ENCODE measurements at regions of chr13 and their contacts with region 1.

Region 1: DNA sequence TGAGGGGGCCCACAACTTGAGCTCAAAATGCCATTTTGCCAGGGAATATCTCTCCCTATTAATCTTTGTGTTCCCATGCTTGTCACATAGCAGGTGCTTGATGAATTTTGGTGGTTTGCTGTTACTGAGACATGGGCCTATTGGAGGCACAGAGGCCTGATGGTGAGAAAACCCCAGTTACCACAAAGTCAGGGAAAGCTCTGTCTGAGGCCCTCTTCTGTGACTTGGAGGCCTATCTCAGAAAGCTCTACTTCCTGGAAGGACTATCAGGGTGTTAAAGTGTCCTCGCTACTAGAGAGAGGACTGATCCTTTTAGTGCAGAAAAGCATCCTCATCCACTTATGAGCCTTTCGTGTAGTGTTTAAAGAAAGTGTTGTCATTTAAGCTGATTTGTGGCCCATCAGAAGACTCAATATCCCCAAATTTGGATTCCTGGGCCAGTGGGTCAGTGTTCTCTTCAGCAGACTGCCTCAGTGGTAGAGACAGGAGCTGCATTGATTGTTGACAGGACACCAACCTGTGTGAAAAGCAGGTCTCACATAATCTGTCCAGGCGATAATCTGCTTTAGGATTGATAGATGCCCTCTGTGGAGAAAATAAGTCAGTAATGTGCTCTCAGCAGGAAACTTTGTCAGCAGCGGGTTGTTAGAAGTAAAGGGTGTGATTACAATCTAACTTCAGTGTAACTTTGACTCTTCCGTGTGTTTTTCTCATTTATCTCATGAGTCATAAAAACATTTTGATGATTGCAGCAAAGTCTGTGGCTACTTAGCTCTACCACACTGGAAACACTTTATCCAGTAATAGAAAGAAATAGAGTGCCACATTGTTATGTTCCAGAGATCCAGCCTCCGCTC is 121.0 kb downstream of the AKAP11 start:
- DNase-seq: peak; percentile 46
- ATAC-seq: peak; percentile 57
- H3K4me3 Mint-ChIP-seq: peak overlapping the region; percentile 80
- H3K27ac Mint-ChIP-seq: peak overlapping the region; percentile 100
- H3K4me1 Mint-ChIP-seq: peaks cover 80% of the 10 kb centered on the region
- H3K27me3 Mint-ChIP-seq: no peaks in the 10 kb centered on the region

Region 2: GRCh38 chr13:41465241-41465847 is 927.6 kb before region 1 on chr13:
- CTCF ChIA-PET with region 1: no interaction called
- POLR2A ChIA-PET with region 1: no interaction called
- intact Hi-C with region 1: loop called in 1 of 2 experiments (anchors 10 kb)
- DNase-seq: peak; percentile 95
- ATAC-seq: peak; percentile 84
- H3K4me3 Mint-ChIP-seq: peak overlapping the region; percentile 82
- H3K27ac Mint-ChIP-seq: peak overlapping the region; percentile 98
- H3K4me1 Mint-ChIP-seq: peaks cover 91% of the 10 kb centered on the region
- H3K27me3 Mint-ChIP-seq: no peaks in the 10 kb centered on the region

Region 3: GRCh38 chr13:41960639-41961465 is 432.1 kb before region 1 on chr13 and contains the start of gene VWA8:
- CTCF ChIA-PET with region 1: no interaction called
- POLR2A ChIA-PET with region 1: no interaction called
- intact Hi-C with region 1: loop called in 1 of 2 experiments (anchors 2 kb)
- DNase-seq: peak; percentile 93
- ATAC-seq: peak; percentile 81
- H3K4me3 Mint-ChIP-seq: peak within 1 kb of the TSS; percentile 92
- H3K27ac Mint-ChIP-seq: peak within 1 kb of the TSS; percentile 99
- H3K4me1 Mint-ChIP-seq: peaks cover 60% of the 10 kb centered on the region
- H3K27me3 Mint-ChIP-seq: peaks cover 2% of the 10 kb centered on the region
- total RNA-seq, gene VWA8: 21.7 to 26.2 TPM

Region 4: GRCh38 chr13:42377640-42378382 is 15.1 kb before region 1 on chr13:
- CTCF ChIA-PET with region 1: interaction called, 24 read pairs
- POLR2A ChIA-PET with region 1: interaction called, 53 read pairs
- intact Hi-C with region 1: loop called (anchors 1 kb)
- DNase-seq: peak; percentile 60
- ATAC-seq: peak; percentile 83
- H3K4me3 Mint-ChIP-seq: no peak overlapping the region
- H3K27ac Mint-ChIP-seq: peak overlapping the region; percentile 97
- H3K4me1 Mint-ChIP-seq: peaks cover 74% of the 10 kb centered on the region
- H3K27me3 Mint-ChIP-seq: no peaks in the 10 kb centered on the region

Region 5: GRCh38 chr13:42405665-42406390 is 12.9 kb after region 1 on chr13:
- CTCF ChIA-PET with region 1: interaction called, 11 read pairs
- POLR2A ChIA-PET with region 1: interaction called, 24 read pairs
- intact Hi-C with region 1: loop called (anchors 1 kb)
- DNase-seq: peak; percentile 83
- ATAC-seq: peak; percentile 86
- H3K4me3 Mint-ChIP-seq: peak overlapping the region; percentile 48
- H3K27ac Mint-ChIP-seq: peak overlapping the region; percentile 94
- H3K4me1 Mint-ChIP-seq: peaks cover 62% of the 10 kb centered on the region
- H3K27me3 Mint-ChIP-seq: no peaks in the 10 kb centered on the region

Region 6: DNA sequence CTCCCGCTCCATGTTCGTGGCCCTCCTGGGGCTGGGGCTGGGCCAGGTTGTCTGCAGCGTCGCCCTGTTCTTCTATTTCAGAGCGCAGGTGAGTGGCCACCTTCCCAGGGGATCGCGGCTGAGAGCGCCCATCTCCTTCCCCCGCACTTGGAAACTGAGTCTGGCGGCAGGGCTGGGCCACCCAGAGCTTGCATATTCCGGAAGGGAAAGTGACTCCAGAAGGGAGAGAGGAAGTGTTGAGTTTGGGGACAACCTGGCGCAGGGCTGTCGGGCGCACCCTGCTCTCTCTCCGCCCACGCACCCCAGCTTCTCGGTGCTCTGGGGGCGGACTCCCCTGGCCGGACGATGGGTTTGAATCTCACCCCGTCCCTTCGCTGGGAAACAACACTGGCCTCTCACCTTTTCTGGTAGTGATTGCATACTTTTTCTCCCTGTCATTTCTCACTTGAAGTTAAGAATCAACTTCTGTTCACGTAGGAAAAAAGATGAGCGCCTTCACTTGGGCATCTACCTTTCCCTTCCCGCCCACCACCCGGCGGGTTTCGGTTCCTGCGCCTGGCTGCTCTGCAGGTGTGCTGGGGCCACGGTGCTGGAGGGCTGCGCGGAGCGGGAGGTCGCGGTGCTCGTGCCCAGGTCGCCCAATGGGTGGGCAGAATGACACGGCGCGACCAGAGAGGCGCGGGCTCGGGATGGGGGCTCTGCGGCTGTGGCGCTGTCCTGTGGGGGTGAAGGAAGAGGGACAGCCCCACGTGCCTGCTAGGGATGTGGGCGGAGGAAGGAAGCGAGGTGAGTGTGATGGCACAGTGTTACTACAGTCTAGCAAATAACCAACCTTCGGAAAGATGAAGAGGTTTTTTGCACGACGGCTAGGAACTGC is 181.7 kb after region 1 on chr13:
- CTCF ChIA-PET with region 1: no interaction called
- POLR2A ChIA-PET with region 1: no interaction called
- intact Hi-C with region 1: loop called (anchors 2 to 5 kb)
- DNase-seq: peak; percentile 82
- ATAC-seq: peak; percentile 82
- H3K4me3 Mint-ChIP-seq: peak overlapping the region; percentile 77
- H3K27ac Mint-ChIP-seq: peak overlapping the region; percentile 86
- H3K4me1 Mint-ChIP-seq: peaks cover 41% of the 10 kb centered on the region
- H3K27me3 Mint-ChIP-seq: peaks cover 34% of the 10 kb centered on the region

Region 7: GRCh38 chr13:43054803-43055802 is 662.2 kb after region 1 on chr13:
- CTCF ChIA-PET with region 1: no interaction called
- POLR2A ChIA-PET with region 1: no interaction called
- intact Hi-C with region 1: loop called in 1 of 2 experiments (anchors 10 kb)
- DNase-seq: peak; percentile 36
- ATAC-seq: peak; percentile 47
- H3K4me3 Mint-ChIP-seq: no peak overlapping the region
- H3K27ac Mint-ChIP-seq: no peak overlapping the region
- H3K4me1 Mint-ChIP-seq: peaks cover 36% of the 10 kb centered on the region
- H3K27me3 Mint-ChIP-seq: no peaks in the 10 kb centered on the region

Measured in activated CD4-positive, alpha-beta T cell treated with anti-CD3 and anti-CD28 coated beads for 36 hours (primary cell).